ENCODE measurements at regions of chr2 and their contacts with region 1.

Region 1: DNA sequence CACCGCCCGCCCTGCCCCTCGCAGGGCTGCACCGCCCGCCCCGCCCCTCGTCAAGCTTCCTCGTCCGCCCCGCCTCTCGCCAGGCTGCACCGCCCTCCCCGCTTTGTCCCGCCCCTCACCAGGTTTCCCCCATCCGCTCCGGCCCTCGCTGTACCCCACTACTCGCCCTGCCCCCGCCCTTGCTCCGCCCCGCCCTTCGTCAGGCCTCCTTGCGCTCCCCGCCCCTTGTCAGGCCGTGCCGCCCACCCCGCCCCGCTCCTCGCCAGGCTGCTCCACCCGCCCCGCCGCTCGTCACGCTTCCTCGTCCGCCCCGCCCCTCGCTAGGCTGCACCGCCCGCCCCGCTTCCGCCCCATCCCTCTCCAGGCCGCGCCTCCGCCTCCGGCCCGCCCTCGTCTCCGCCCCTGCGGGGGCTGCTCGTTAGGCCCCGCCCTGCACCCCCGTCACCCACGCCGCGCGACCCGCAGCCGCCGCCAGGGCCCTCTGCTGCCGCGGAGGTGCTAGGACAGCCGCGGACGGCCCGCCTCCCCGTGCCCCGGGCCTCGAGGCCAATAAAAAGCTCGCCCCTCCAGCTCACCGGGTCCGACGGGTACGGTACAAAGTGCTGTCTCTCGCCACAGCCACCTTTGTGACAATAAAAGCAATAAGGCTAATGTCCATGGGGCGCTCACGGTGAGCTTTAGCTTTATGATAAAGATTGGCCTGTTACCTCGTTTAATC is 574 bp upstream of the DNPEP start:
- DNase-seq: peak; percentile 95 to 100 (median 98)
- ATAC-seq: peak; percentile 79 to 83 (median 81)
- H3K4me3 ChIP-seq: peak overlapping the region in 1 of 2 donors; percentile 37
- H3K4me3 Mint-ChIP-seq: peak overlapping the region; percentile 58 to 94 (median 63)
- H3K27ac ChIP-seq: peak overlapping the region; percentile 81
- H3K27ac Mint-ChIP-seq: peak overlapping the region; percentile 85 to 95
- H3K4me1 ChIP-seq: peaks cover 5 to 23% of the 10 kb centered on the region in 2 experiments
- H3K4me1 Mint-ChIP-seq: peaks cover 6 to 34% (median 28%) of the 10 kb centered on the region in 3 donors
- H3K27me3 ChIP-seq: no peaks in the 10 kb centered on the region
- H3K27me3 Mint-ChIP-seq: no peaks in the 10 kb centered on the region

Region 2: DNA sequence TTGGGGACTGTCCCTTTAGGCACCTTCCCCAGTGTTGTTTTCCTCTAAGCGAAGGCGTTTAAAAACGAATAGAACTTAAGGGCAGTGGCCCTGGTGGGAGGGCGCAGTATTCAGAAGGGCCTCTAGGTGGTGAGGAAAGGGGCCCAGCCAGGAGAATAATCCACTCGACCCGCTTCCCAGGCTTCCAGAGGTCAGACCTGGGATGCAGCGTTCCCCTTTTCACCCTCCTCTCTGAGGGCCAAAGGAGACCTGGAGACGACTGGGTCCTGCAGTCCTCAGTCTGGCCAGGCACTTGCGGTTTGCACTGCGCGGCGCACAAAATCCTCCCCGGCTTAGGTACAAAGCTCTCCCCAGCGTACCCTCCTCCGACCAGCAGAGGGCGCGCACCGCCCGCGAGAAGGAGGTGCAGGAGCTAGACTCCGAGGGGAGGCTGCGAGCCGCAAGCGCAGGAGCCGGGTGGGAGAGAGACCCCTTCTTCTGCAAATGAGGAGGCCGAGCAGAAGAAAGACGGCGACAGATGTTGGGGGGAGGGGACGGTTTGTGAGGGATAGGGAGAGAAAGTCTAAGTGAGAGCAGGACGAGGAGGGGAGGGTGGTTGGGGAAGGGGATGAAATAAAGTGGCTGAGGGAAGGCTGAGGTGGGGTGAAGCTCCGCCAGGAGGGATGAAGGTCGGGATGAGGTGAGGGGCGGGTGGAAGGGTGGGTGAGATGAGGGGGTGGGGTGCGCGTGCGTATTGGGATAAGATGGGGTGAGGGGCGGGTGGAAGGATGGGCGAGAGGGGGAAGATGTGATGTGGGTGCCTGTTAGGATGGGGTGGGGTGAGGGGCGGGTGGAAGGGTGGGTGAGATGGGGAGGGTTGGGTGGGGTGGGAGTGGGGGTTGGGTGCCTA is 408.2 kb before region 1 on chr2:
- CTCF ChIA-PET with region 1: interaction called in 1 of 2 experiments, 3 read pairs
- POLR2A ChIA-PET with region 1: interaction called in 1 of 2 experiments, 10 read pairs
- DNase-seq: peak; percentile 59 to 90 (median 79)
- ATAC-seq: peak; percentile 84 to 90 (median 88)
- H3K4me3 ChIP-seq: peak overlapping the region; percentile 11 to 57
- H3K4me3 Mint-ChIP-seq: peak overlapping the region; percentile 57 to 83 (median 74)
- H3K27ac ChIP-seq: no peak overlapping the region
- H3K27ac Mint-ChIP-seq: no peak overlapping the region
- H3K4me1 ChIP-seq: peaks cover 10 to 47% of the 10 kb centered on the region in 2 experiments
- H3K4me1 Mint-ChIP-seq: peaks cover 30 to 34% (median 31%) of the 10 kb centered on the region in 3 donors
- H3K27me3 ChIP-seq: peaks cover 15 to 70% of the 10 kb centered on the region in 2 experiments
- H3K27me3 Mint-ChIP-seq: peaks cover 68 to 80% of the 10 kb centered on the region in 2 donors

Measured in T-cell (primary cell).